ENCODE measurements at regions of chr16 and their contacts with region 1.

Region 1: DNA sequence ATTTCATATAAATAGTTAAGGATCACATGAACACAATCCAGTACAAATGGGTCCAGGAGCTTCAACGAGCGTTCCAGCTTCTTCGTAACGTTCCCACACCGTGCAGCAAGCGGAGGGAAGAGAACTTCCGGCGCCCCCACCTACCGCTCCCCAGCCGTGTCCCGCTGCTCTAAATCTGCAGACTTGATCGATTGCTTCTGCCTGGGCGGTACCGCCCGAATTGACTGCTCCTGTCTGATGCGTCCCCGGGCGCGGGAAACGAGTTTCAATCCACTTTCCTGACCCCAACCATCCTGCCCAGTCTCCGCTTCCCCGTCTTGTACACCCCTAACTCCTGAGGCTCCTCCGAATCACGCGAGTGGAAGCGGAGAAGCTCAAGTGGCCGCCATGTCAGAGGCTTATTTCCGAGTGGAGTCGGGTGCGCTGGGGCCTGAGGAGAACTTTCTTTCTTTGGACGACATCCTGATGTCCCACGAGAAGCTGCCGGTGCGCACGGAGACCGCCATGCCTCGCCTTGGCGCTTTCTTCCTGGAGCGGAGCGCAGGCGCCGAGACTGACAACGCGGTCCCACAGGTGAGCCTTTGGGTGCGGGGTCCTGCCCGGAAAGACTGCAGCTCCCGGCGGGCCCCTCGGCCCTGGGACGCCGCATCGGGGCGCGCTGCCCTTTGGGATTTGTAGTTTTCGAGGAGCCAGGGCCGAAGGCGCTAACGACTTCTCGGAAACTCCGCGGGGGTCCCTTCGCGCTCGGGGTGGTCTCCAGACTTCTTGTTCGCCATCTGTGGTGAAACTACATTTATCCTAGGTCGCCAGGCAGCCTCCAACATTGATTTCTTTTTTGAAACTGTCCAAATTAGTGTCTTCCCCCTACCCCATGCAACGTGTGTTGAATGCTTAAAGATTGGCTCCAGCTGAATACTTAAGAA is at the start of gene GINS3:
- DNase-seq: peak; percentile 62 to 90 (median 83)
- ATAC-seq: peak; percentile 97
- H3K4me3 ChIP-seq: peak within 1 kb of the TSS; percentile 96 to 98
- H3K4me3 Mint-ChIP-seq: peak within 1 kb of the TSS; percentile 100
- H3K27ac ChIP-seq: peak within 1 kb of the TSS; percentile 69 to 79
- H3K27ac Mint-ChIP-seq: peak within 1 kb of the TSS; percentile 97
- H3K4me1 ChIP-seq: peaks cover 6% of the 10 kb centered on the region
- H3K4me1 Mint-ChIP-seq: peaks cover 16% of the 10 kb centered on the region
- H3K27me3 ChIP-seq: no peaks in the 10 kb centered on the region
- H3K27me3 Mint-ChIP-seq: no peaks in the 10 kb centered on the region
- CTCF ChIP-seq: no peak
- total RNA-seq, gene GINS3: 0.54 to 1.1 TPM

Region 2: DNA sequence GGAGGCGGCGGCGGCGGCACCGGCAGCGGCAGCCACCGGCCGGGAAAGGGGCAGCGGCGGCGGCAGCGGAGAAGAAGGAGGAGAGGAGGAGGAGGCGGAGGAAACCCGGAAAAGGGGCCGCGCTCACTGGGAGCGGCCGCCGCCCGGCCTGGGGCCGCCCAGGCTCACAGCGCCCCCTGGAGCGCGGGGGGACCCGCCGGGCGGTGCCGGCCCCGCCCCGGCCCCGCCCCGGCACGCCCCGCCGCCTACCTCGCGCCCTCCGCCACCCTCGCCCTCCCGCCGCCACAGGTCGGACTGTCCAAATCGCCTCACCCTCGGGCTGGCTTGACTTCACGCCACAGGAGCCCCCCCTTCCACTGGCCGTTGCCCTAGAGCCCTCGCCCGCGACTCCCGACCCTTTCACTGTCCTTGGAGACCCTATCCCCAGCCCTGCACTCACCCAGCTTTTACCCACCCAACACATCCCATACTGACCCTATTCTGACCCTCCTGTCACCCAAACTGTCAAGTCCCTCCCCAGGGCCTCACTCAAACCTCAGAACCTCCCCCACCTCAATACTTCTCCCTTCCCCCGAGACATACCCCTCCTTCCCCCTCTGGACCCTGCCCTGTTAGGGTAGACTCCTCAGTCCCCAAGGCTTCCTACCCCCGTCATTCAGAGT is 194.3 kb before region 1 on chr16 and contains the start of gene CSNK2A2:
- CTCF ChIA-PET with region 1: no interaction called
- POLR2A ChIA-PET with region 1: no interaction called
- intact Hi-C with region 1: loop called (anchors 2 to 5 kb)
- DNase-seq: peak; percentile 42 to 87 (median 69)
- ATAC-seq: peak; percentile 94
- H3K4me3 ChIP-seq: peak within 1 kb of the TSS; percentile 56 to 67
- H3K4me3 Mint-ChIP-seq: peak within 1 kb of the TSS; percentile 89
- H3K27ac ChIP-seq: no peak within 1 kb of the TSS
- H3K27ac Mint-ChIP-seq: peak within 1 kb of the TSS; percentile 88
- H3K4me1 ChIP-seq: peaks cover 26% of the 10 kb centered on the region
- H3K4me1 Mint-ChIP-seq: peaks cover 39% of the 10 kb centered on the region
- H3K27me3 ChIP-seq: no peaks in the 10 kb centered on the region
- H3K27me3 Mint-ChIP-seq: peaks cover 7% of the 10 kb centered on the region
- CTCF ChIP-seq: no peak
- total RNA-seq, gene CSNK2A2: 53.3 to 58.4 TPM

Region 3: DNA sequence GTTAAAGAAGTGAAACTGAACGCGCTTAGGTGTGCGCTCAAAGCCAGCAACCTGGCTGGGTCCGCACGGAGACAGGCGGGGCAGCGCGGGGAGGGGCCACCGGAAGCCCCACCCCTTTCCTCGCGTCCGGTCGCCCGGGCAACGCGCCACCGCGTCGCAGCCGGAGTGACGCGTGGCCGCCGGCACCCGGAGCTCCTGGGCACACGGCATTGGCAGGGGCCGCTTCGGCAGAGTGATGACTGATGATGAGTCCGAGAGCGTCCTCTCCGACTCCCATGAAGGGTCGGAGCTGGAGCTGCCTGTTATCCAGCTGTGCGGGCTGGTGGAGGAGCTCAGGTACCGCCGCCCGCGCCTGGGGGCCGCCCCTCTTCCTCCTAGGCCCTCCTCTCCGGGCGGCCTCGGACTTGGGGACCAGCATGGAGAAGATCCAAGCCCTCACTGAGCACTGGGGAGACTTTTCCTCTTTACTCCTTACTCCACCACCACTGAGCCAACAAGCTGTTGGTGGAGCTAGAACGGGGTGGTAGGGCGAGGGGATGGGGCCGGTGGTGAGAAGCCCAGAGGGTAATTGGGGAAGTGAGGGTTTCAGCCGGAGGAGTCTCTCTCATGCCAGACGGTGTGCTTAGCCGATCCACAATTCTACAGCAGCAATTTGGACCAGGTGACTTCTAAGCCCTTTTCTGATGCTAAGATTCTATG is 142.5 kb before region 1 on chr16:
- CTCF ChIA-PET with region 1: no interaction called
- POLR2A ChIA-PET with region 1: no interaction called
- intact Hi-C with region 1: loop called in 1 of 2 experiments (anchors 5 kb)
- DNase-seq: peak; percentile 70 to 91 (median 81)
- ATAC-seq: peak; percentile 98
- H3K4me3 ChIP-seq: peak overlapping the region; percentile 64 to 75
- H3K4me3 Mint-ChIP-seq: peak overlapping the region; percentile 83
- H3K27ac ChIP-seq: peak overlapping the region in 1 of 2 experiments; percentile 21
- H3K27ac Mint-ChIP-seq: no peak overlapping the region
- H3K4me1 ChIP-seq: peaks cover 10% of the 10 kb centered on the region
- H3K4me1 Mint-ChIP-seq: peaks cover 9% of the 10 kb centered on the region
- H3K27me3 ChIP-seq: peaks cover 0 to 6% of the 10 kb centered on the region in 2 experiments
- H3K27me3 Mint-ChIP-seq: peaks cover 2% of the 10 kb centered on the region
- CTCF ChIP-seq: no peak

Region 4: DNA sequence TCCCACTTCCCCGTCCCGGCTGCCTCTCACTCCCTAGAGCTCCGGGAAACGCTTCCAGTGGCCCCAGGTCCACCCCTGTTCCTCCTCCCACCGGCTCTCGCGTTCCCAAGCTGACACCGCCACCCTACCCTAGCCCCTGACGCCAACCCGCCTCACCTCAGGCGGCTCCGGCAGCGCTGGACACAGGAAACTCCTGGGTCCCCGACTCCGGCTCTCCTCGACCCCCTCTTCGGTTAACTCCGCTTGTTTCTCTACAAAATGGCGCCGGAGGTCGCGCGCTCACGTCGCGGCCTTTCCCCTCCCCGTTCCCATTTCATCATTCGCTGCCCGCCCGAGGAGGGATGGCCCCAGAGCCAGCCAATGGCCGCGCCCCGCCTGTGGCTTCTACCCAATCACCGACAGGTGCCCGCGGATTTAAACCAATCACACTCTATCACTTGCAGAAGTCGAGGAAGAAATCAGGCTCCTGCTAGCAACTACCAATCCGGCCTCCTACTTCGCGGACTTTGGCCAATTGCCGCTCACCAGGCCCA is 237.2 kb after region 1 on chr16 and contains the start of gene CNOT1:
- CTCF ChIA-PET with region 1: no interaction called
- POLR2A ChIA-PET with region 1: interaction called, 4 read pairs
- intact Hi-C with region 1: loop called in 1 of 2 experiments (anchors 1 kb)
- DNase-seq: peak; percentile 95 to 99 (median 97)
- ATAC-seq: peak; percentile 78
- H3K4me3 ChIP-seq: peak within 1 kb of the TSS; percentile 93
- H3K4me3 Mint-ChIP-seq: peak within 1 kb of the TSS; percentile 100
- H3K27ac ChIP-seq: peak within 1 kb of the TSS; percentile 91 to 98
- H3K27ac Mint-ChIP-seq: peak within 1 kb of the TSS; percentile 100
- H3K4me1 ChIP-seq: peaks cover 18% of the 10 kb centered on the region
- H3K4me1 Mint-ChIP-seq: peaks cover 30% of the 10 kb centered on the region
- H3K27me3 ChIP-seq: no peaks in the 10 kb centered on the region
- H3K27me3 Mint-ChIP-seq: no peaks in the 10 kb centered on the region
- CTCF ChIP-seq: no peak
- total RNA-seq, gene CNOT1: 165 to 177 TPM

Region 5: DNA sequence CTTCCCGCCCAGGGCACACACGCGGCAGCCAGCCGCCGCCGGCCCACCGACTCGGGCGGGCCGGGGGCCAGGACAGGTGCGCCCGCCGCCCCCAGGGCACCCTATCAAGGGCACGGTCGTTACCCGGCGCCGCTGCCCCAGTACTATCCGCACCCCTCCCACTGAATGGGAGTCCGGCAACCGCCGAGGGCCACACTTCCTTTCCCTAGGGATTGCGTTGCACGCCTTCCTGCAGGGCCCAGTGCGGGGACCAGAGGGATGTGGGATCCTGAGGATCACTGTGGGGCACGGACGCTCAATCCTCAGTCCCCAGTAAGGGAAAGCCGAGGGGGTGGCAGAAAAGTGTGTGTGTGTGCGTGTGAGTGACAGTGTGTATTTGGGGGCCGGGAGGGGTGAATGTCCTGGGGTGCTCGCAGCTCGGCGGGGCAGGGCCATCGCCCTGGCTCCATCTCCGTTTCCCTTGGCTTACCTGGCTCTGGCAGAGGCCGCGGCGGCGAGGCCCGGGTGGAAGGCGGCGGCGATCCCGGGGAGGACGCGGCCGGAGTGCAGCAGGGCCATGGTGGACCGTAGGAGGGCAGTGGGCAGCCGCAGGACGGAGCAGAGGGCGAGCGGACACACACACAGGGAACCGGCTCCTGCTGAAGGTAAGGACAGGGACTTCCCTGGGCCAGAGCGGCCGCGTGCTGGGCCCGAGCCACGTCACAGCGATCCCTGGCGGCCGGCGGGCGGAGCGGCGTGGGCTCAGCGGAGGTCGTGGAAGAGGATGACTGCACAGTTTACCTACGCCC is 341.4 kb after region 1 on chr16 and contains the start of gene GOT2:
- CTCF ChIA-PET with region 1: no interaction called
- POLR2A ChIA-PET with region 1: no interaction called
- intact Hi-C with region 1: loop called (anchors 1 to 5 kb)
- DNase-seq: peak; percentile 63 to 90 (median 77)
- ATAC-seq: peak; percentile 97
- H3K4me3 ChIP-seq: peak within 1 kb of the TSS; percentile 73 to 82
- H3K4me3 Mint-ChIP-seq: peak within 1 kb of the TSS; percentile 98
- H3K27ac ChIP-seq: peak within 1 kb of the TSS; percentile 44 to 71
- H3K27ac Mint-ChIP-seq: peak within 1 kb of the TSS; percentile 91
- H3K4me1 ChIP-seq: peaks cover 21% of the 10 kb centered on the region
- H3K4me1 Mint-ChIP-seq: peaks cover 41% of the 10 kb centered on the region
- H3K27me3 ChIP-seq: no peaks in the 10 kb centered on the region
- H3K27me3 Mint-ChIP-seq: no peaks in the 10 kb centered on the region
- CTCF ChIP-seq: peak; percentile 81
- total RNA-seq, gene GOT2: 14.0 to 15.2 TPM

Measured in CD8-positive, alpha-beta T cell (primary cell).